ENCODE measurements at regions of chr9 and their contacts with region 1.

Region 1: DNA sequence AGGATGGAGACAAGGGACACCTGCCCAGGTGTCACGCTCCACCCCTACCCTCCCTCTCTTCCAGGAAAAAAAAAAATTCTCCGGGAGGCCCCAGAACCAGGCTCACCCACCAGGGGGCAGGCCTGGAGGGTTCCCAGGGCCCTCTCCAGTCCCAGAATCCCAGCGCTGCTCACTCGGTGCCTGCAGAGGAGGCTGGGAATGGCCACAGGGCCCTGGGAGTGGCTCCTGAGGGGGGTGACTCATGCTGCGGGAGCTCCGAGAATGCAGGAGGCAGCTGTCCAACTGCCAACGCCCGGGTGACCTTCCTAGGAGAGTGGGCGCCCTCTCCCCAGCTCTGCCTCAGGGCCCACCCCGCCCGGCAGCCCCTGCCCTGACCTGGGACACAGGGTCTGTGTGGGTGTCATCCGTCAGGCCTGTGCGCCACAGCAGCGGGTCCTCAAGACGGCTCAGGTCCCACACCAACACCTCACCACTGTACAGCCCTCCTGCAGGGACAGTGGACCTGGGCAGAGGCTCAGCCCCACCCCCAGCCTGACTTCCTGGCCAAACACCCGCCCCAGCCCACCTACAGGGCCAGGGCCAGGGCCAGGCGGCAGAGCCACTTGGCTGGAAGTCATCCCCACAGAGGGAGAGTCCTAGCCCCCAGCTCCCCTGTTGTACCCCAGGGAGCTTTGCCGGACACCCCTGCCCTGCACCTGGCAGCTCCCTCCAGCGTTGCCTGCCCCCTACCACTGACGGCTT is 21.2 kb downstream of the DYNC2I2 start:
- DNase-seq: peak; percentile 93 to 98
- ATAC-seq: peak; percentile 86 to 93
- H3K4me3 ChIP-seq: peak overlapping the region; percentile 31
- H3K27ac ChIP-seq: peak overlapping the region; percentile 97 to 99
- H3K4me1 ChIP-seq: peaks cover 43% of the 10 kb centered on the region
- CTCF ChIP-seq: peak; percentile 74
- EP300 ChIP-seq: peak; percentile 26 to 54; a peak in 2 of 5 replicates
- POLR2A ChIP-seq: peak; percentile 10; the same call in 1 of the 2 replicates
- RAD21 ChIP-seq: peak; percentile 59 to 69

Region 2: GRCh38 chr9:128521956-128522355 is 113.5 kb before region 1 on chr9:
- CTCF ChIA-PET with region 1: no interaction called
- POLR2A ChIA-PET with region 1: no interaction called
- DNase-seq: no peak
- ATAC-seq: no peak
- H3K4me3 ChIP-seq: no peak overlapping the region
- H3K27ac ChIP-seq: no peak overlapping the region
- H3K4me1 ChIP-seq: no peaks in the 10 kb centered on the region
- CTCF ChIP-seq: no peak
- EP300 ChIP-seq: no peak
- POLR2A ChIP-seq: no peak
- RAD21 ChIP-seq: no peak

Region 3: DNA sequence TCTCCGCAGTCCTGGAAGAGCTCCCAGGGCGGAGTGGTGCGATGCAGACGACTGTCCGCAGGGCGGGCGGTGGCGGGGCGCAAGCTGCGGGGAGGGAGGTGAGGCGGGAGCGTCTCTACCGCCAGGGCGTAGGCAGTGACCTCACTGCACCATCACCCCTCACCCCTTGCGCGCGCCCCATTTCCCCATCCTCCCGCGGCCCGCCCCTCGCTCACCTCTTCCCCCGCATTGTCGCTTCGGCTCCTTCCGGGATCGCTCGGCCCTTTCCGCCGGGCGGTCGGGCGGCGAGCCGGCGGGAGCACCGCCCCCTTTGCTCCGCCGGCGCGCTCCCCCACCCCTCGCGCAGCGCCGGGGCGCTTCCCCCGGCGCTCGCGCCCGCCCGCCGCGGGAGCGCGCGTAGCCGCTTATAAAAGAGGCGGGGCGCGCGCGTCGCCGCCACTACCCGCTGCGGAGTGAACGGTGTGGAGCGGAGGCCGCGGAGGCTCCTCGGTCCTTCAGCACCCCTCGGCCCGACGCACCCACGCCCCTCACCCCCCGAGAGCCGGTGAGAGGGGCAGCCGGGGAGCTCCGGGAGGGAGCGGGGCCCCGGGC is 83.2 kb before region 1 on chr9 and contains the start of gene SPTAN1:
- CTCF ChIA-PET with region 1: interaction called, 6 read pairs
- POLR2A ChIA-PET with region 1: interaction called, 10 read pairs
- DNase-seq: peak; percentile 87
- ATAC-seq: peak; percentile 76 to 85
- H3K4me3 ChIP-seq: peak within 1 kb of the TSS; percentile 75
- H3K27ac ChIP-seq: peak within 1 kb of the TSS; percentile 88 to 95
- H3K4me1 ChIP-seq: peaks cover 48% of the 10 kb centered on the region
- CTCF ChIP-seq: no peak
- EP300 ChIP-seq: no peak
- POLR2A ChIP-seq: peak; percentile 98
- RAD21 ChIP-seq: no peak
- polyA plus RNA-seq, gene SPTAN1: 122 and 144 TPM in 2 replicates

Region 4: GRCh38 chr9:128653941-128654340 is 18.5 kb after region 1 on chr9:
- CTCF ChIA-PET with region 1: interaction called, 25 read pairs
- POLR2A ChIA-PET with region 1: interaction called, 8 read pairs
- DNase-seq: no peak
- ATAC-seq: no peak
- H3K4me3 ChIP-seq: no peak overlapping the region
- H3K27ac ChIP-seq: peak overlapping the region in 1 of 2 experiments; percentile 34; a peak in 3 of 6 replicates
- H3K4me1 ChIP-seq: peaks cover 4% of the 10 kb centered on the region; the same call in 1 of the 3 replicates
- CTCF ChIP-seq: no peak
- EP300 ChIP-seq: no peak
- POLR2A ChIP-seq: no peak
- RAD21 ChIP-seq: no peak

Region 5: GRCh38 chr9:128669786-128670185 is 34.3 kb after region 1 on chr9:
- CTCF ChIA-PET with region 1: interaction called, 10 read pairs
- POLR2A ChIA-PET with region 1: no interaction called
- DNase-seq: no peak
- ATAC-seq: no peak
- H3K4me3 ChIP-seq: no peak overlapping the region
- H3K27ac ChIP-seq: no peak overlapping the region
- H3K4me1 ChIP-seq: peaks cover 13% of the 10 kb centered on the region
- CTCF ChIP-seq: no peak
- EP300 ChIP-seq: no peak
- POLR2A ChIP-seq: no peak
- RAD21 ChIP-seq: no peak

Region 6: DNA sequence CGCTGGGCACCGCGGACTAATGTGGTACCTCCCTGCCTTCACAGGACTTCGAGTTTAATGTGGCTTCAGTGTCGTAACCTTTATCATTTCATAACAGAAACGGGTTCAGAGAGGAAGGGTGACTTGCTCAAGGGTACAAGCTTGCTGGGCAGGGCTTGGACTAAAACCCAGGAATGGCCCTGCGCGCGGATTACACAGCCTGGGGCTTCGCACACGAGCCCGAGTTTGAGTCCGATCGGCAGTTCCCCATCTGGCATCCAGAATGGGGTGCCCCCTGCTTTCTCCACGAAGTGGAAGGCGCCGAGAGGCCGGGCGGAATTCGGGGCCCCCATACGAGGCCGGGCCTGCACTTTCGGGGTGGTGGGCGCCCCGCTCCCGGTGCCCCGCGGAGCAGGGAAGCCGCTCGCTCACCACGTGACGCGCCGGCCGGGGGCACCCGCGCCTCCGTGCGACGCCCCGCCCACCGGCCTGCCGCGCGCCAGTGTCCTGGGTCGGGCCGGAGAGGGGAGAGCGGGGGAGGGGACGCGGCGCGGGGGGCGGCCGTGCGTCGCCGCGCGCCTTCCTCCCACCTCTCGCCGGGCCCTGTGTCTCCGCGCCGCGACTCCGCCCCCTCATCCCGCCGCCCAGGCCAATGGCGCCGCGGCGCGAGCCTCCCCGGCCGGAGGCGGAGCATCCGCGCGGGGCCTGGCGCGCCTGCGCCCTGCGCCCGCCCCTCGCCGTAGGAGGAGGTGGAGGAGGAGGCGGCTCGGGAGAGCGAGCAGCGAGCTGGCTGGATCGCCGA is 53.2 kb after region 1 on chr9 and contains the start of gene SET:
- CTCF ChIA-PET with region 1: interaction called, 22 read pairs
- POLR2A ChIA-PET with region 1: interaction called, 24 read pairs
- DNase-seq: peak; percentile 94
- ATAC-seq: peak; percentile 68 to 81
- H3K4me3 ChIP-seq: peak within 1 kb of the TSS; percentile 100
- H3K27ac ChIP-seq: peak within 1 kb of the TSS; percentile 97 to 100
- H3K4me1 ChIP-seq: peaks cover 50% of the 10 kb centered on the region
- CTCF ChIP-seq: no peak
- EP300 ChIP-seq: no peak
- POLR2A ChIP-seq: peak; percentile 71
- RAD21 ChIP-seq: no peak
- polyA plus RNA-seq, gene SET: 293 and 518 TPM in 2 replicates

Region 7: GRCh38 chr9:128696923-128697707 is 61.7 kb after region 1 on chr9:
- CTCF ChIA-PET with region 1: interaction called, 22 read pairs
- POLR2A ChIA-PET with region 1: interaction called, 5 read pairs
- DNase-seq: no peak
- ATAC-seq: peak in 1 of 2 experiments; percentile 22; a peak in 1 of 6 replicates
- H3K4me3 ChIP-seq: no peak overlapping the region
- H3K27ac ChIP-seq: no peak overlapping the region
- H3K4me1 ChIP-seq: peaks cover 15% of the 10 kb centered on the region
- CTCF ChIP-seq: no peak
- EP300 ChIP-seq: no peak
- POLR2A ChIP-seq: no peak
- RAD21 ChIP-seq: no peak

Region 8: GRCh38 chr9:128702445-128702948 is 67.0 kb after region 1 on chr9 and contains the start of gene PKN3:
- CTCF ChIA-PET with region 1: interaction called, 21 read pairs
- POLR2A ChIA-PET with region 1: interaction called, 5 read pairs
- DNase-seq: peak; percentile 89 to 98
- ATAC-seq: peak; percentile 83 to 89
- H3K4me3 ChIP-seq: peak within 1 kb of the TSS; percentile 94
- H3K27ac ChIP-seq: peak within 1 kb of the TSS; percentile 95 to 100
- H3K4me1 ChIP-seq: peaks cover 9% of the 10 kb centered on the region
- CTCF ChIP-seq: peak; percentile 99
- EP300 ChIP-seq: no peak
- POLR2A ChIP-seq: peak; percentile 25
- RAD21 ChIP-seq: peak; percentile 35 to 61; a peak in 4 of 5 replicates
- polyA plus RNA-seq, gene PKN3: 7.6 and 9.0 TPM in 2 replicates

Region 9: DNA sequence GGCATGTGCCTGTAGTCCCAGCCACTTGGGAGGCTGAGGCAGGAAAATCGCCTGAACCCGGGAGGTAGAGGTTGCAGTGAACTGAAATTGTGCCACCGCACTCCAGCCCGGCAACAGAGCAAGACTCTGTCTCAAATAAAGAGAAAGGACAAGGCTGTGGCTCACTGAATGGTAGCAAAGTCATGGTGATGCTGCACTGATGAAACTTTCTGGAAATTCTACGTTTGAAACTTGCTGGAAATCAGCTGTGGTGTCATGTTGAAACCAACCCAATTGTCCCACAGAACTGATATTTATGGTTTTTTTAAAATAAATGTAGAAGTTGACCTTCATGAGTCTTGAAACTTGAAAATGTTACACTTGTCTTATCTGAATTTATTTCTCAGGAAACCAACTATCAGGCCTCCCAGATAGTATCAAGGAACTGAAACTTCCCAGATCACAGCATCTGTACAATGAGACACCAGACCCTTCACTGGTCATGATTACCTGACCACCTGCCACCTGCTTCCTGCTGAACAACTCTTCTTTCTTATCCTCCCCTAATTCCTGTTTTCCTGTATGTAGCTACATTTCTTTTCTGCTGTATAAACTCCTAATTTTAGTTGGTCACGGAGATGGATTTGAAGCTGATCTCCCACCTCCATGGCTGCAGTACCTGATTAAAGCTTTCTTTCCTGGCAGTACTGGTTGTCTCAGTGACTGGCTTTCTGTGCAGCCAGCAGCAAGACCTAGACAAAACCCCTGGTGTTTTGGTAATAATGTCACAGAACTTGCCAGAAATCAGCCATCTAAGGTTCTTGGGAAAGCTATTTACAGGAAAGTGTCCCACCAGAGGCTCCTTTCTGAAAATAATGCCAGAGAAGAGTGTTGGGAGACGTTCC is 146.0 kb after region 1 on chr9:
- CTCF ChIA-PET with region 1: no interaction called
- POLR2A ChIA-PET with region 1: no interaction called
- DNase-seq: no peak
- ATAC-seq: no peak
- H3K4me3 ChIP-seq: no peak overlapping the region
- H3K27ac ChIP-seq: 0 out of 6 replicates have a peak overlapping the region, but pooled peaks of 1 of the 2 experiments have one; percentile 26
- H3K4me1 ChIP-seq: peaks cover 8% of the 10 kb centered on the region
- CTCF ChIP-seq: no peak
- EP300 ChIP-seq: no peak
- POLR2A ChIP-seq: no peak
- RAD21 ChIP-seq: no peak

Measured in A549 (cell line).